CD4-positive, alpha-beta memory T cell (primary cell): ENCODE measurements at regions of chr18 and their contacts with region 1.

Region 1: GRCh38 chr18:2641638-2642037 is 13.9 kb upstream of the SMCHD1 start:
- DNase-seq: peak in 4 of 5 donors; percentile 52 to 67 (median 59)
- H3K4me3 ChIP-seq: peak overlapping the region in 1 of 2 donors; percentile 8
- H3K4me3 Mint-ChIP-seq: peak overlapping the region; percentile 73 to 89 (median 84)
- H3K27ac ChIP-seq: peak overlapping the region; percentile 73
- H3K27ac Mint-ChIP-seq: peak overlapping the region in 3 of 7 donors; percentile 96 to 97 (median 96)
- H3K4me1 ChIP-seq: peaks cover 86% of the 10 kb centered on the region
- H3K4me1 Mint-ChIP-seq: peaks cover 32 to 55% (median 45%) of the 10 kb centered on the region in 4 donors
- H3K27me3 ChIP-seq: no peaks in the 10 kb centered on the region
- H3K27me3 Mint-ChIP-seq: peaks cover 0 to 2% of the 10 kb centered on the region in 2 donors

Region 2: DNA sequence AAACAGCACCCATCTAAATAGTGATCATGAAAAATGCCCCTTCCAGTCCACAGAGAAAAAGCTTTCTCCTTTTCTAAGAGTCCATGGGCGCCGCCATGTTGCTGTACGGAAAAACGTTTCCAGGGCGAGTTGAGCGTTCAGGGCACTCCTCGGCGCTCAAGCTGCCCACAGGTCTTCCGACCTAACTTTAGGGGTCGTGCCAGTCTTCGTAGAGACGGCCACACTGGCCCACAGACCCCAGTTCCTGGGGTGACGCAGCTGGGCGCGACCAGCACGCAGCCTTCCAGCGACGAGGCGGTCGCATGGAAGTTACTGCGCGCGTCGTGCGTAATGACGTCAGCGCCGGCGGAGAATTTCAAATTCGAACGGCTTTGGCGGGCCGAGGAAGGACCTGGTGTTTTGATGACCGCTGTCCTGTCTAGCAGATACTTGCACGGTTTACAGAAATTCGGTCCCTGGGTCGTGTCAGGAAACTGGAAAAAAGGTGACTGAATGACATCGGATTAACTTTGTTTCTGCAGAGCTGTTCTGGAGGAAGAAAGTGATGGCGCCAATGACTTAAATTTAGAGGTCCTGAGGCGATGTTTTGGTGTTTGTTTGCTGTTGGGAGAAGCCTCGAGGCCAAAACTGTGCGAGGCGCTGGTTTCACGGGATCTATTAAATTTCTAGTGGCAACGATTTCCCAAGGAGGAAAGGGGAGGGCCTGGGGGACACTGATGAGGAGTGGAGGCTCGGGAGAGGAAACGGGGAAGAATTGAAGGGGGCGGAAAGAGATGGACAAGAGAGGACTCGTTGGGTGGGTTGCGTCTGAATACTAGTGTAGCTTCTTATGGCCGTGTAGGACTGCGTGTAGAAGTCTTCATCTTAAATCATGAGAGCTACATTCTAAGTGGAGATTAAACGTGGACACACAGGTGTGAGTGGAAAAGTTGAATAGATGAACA is 70.2 kb before region 1 on chr18 and contains the starts of genes METTL4 and NDC80:
- CTCF ChIA-PET with region 1: interaction called, 16 read pairs
- POLR2A ChIA-PET with region 1: interaction called, 195 read pairs
- intact Hi-C with region 1: loop called (anchors 1 kb)
- DNase-seq: peak; percentile 84 to 91 (median 85)
- H3K4me3 ChIP-seq: peak within 1 kb of the TSS; percentile 80 to 88
- H3K4me3 Mint-ChIP-seq: peak within 1 kb of the TSS; percentile 99 to 100 (median 100)
- H3K27ac ChIP-seq: peak within 1 kb of the TSS; percentile 99
- H3K27ac Mint-ChIP-seq: peak within 1 kb of the TSS; percentile 99 to 100 (median 100)
- H3K4me1 ChIP-seq: peaks cover 44% of the 10 kb centered on the region
- H3K4me1 Mint-ChIP-seq: peaks cover 42 to 74% (median 56%) of the 10 kb centered on the region in 4 donors
- H3K27me3 ChIP-seq: no peaks in the 10 kb centered on the region
- H3K27me3 Mint-ChIP-seq: no peaks in the 10 kb centered on the region
- total RNA-seq, gene METTL4: 25.8 to 29.3 TPM
- total RNA-seq, gene NDC80: 3.8 to 6.2 TPM

Region 3: DNA sequence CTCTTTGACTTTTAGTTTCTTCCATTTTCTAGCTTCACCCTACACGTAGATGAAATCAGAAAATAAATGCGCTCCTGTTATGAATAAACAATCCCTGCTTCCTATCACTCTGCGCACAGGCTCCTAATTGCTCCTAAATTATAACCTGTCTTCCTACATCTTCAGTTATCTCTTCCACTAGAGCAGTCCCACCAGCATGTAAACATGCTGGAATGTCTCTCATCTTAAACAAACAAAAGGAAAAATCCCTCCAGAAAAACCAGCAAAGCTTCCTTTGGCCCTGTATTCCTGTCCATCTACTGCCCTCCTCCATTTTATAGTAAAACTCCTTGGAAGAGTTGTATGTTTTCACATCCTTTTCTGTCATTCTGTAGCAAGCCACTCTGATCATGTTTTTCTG is 100.0 kb after region 1 on chr18:
- CTCF ChIA-PET with region 1: no interaction called
- POLR2A ChIA-PET with region 1: no interaction called
- intact Hi-C with region 1: no loop called
- DNase-seq: no peak
- H3K4me3 ChIP-seq: no peak overlapping the region
- H3K4me3 Mint-ChIP-seq: no peak overlapping the region
- H3K27ac ChIP-seq: no peak overlapping the region
- H3K27ac Mint-ChIP-seq: peak overlapping the region in 6 of 7 donors; percentile 19 to 77 (median 68)
- H3K4me1 ChIP-seq: no peaks in the 10 kb centered on the region
- H3K4me1 Mint-ChIP-seq: peaks cover 8 to 19% (median 11%) of the 10 kb centered on the region in 4 donors
- H3K27me3 ChIP-seq: no peaks in the 10 kb centered on the region
- H3K27me3 Mint-ChIP-seq: no peaks in the 10 kb centered on the region